ENCODE measurements at regions of chr10 and their contacts with region 1.

Region 1: DNA sequence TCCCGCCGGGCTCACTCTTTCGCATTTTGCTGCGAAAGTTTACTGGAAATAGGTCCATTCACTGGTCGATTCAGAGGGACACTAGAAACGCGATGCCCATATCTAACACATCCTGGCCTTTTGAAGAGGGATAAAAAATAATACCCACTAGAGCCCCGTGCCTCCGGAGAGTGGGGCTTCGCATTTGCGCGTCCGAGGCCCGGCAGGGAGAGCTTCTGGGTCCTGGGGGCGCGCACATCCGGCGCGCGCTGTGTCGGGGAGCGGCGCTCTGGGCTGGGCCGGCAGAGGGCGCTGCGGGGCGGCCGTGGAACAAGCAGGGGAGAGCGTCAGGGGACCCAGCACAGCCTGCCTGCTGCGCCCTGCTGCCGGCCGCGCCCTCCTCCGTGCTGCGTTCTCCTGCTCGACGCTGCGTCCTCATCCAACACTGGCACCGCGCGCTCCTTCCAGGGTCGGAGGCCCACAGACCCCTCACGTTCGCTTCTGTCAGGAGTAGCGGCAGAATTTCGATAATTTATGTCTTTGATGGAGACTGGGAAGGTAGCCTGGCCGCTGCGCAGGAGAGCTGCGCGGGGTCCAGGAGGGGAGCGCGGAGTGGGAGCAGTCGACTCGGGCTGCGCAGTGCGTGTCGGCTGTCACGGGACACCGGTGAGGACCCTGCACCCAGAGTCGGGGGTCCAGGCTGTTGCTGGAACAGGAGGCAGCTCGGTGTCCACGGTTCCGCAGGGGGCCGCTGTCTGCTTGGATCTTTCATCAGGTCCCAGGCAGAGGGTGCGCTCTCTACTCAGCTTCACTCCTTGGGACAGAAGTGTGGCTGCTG is 41.5 kb upstream of the ZNF32 start:
- DNase-seq: peak; percentile 69 to 93 (median 88)
- ATAC-seq: peak; percentile 98
- H3K4me3 ChIP-seq: peak overlapping the region; percentile 90
- H3K4me3 Mint-ChIP-seq: peak overlapping the region; percentile 88 to 93 (median 92)
- H3K27ac ChIP-seq: no peak overlapping the region
- H3K27ac Mint-ChIP-seq: peak overlapping the region in 7 of 9 donors; percentile 28 to 84 (median 43)
- H3K4me1 ChIP-seq: no peaks in the 10 kb centered on the region
- H3K4me1 Mint-ChIP-seq: peaks cover 0 to 10% (median 6%) of the 10 kb centered on the region in 7 donors
- H3K27me3 ChIP-seq: no peaks in the 10 kb centered on the region
- H3K27me3 Mint-ChIP-seq: peaks cover 8 to 27% (median 17%) of the 10 kb centered on the region in 5 donors

Region 2: GRCh38 chr10:43655311-43655710 is 34.9 kb before region 1 on chr10:
- CTCF ChIA-PET with region 1: no interaction called
- POLR2A ChIA-PET with region 1: no interaction called
- intact Hi-C with region 1: no loop called
- DNase-seq: no peak
- ATAC-seq: no peak
- H3K4me3 ChIP-seq: no peak overlapping the region
- H3K4me3 Mint-ChIP-seq: no peak overlapping the region
- H3K27ac ChIP-seq: no peak overlapping the region
- H3K27ac Mint-ChIP-seq: no peak overlapping the region
- H3K4me1 ChIP-seq: no peaks in the 10 kb centered on the region
- H3K4me1 Mint-ChIP-seq: no peaks in the 10 kb centered on the region
- H3K27me3 ChIP-seq: no peaks in the 10 kb centered on the region
- H3K27me3 Mint-ChIP-seq: peaks cover 4 to 16% (median 9%) of the 10 kb centered on the region in 5 donors

Region 3: GRCh38 chr10:43808136-43808535 is 118.0 kb after region 1 on chr10:
- CTCF ChIA-PET with region 1: no interaction called
- POLR2A ChIA-PET with region 1: no interaction called
- intact Hi-C with region 1: loop called in 1 of 2 experiments (anchors 2 kb)
- DNase-seq: peak in 1 of 9 donors; percentile 9
- ATAC-seq: no peak
- H3K4me3 ChIP-seq: no peak overlapping the region
- H3K4me3 Mint-ChIP-seq: peak overlapping the region in 7 of 10 donors; percentile 11 to 69 (median 58)
- H3K27ac ChIP-seq: no peak overlapping the region
- H3K27ac Mint-ChIP-seq: peak overlapping the region in 8 of 9 donors; percentile 2 to 86 (median 55)
- H3K4me1 ChIP-seq: peaks cover 16% of the 10 kb centered on the region in 2 donors
- H3K4me1 Mint-ChIP-seq: peaks cover 20 to 59% (median 52%) of the 10 kb centered on the region in 7 donors
- H3K27me3 ChIP-seq: no peaks in the 10 kb centered on the region
- H3K27me3 Mint-ChIP-seq: peaks cover 0 to 24% (median 0%) of the 10 kb centered on the region in 5 donors

Region 4: GRCh38 chr10:43846187-43846680 is 156.1 kb after region 1 on chr10:
- CTCF ChIA-PET with region 1: no interaction called
- POLR2A ChIA-PET with region 1: interaction called, 3 read pairs
- intact Hi-C with region 1: loop called in 1 of 2 experiments (anchors 1 kb)
- DNase-seq: peak in 5 of 9 donors; percentile 10 to 31 (median 14)
- ATAC-seq: peak; percentile 54
- H3K4me3 ChIP-seq: peak overlapping the region; percentile 54
- H3K4me3 Mint-ChIP-seq: peak overlapping the region; percentile 61 to 88 (median 82)
- H3K27ac ChIP-seq: peak overlapping the region; percentile 36
- H3K27ac Mint-ChIP-seq: peak overlapping the region; percentile 14 to 93 (median 83)
- H3K4me1 ChIP-seq: peaks cover 9 to 12% of the 10 kb centered on the region in 2 donors
- H3K4me1 Mint-ChIP-seq: peaks cover 15 to 44% (median 34%) of the 10 kb centered on the region in 7 donors
- H3K27me3 ChIP-seq: no peaks in the 10 kb centered on the region
- H3K27me3 Mint-ChIP-seq: peaks cover 0 to 4% (median 0%) of the 10 kb centered on the region in 5 donors

Region 5: GRCh38 chr10:43939939-43940820 is 250.0 kb after region 1 on chr10:
- CTCF ChIA-PET with region 1: no interaction called
- POLR2A ChIA-PET with region 1: no interaction called
- intact Hi-C with region 1: no loop called
- DNase-seq: peak in 1 of 9 donors; percentile 8
- ATAC-seq: no peak
- H3K4me3 ChIP-seq: no peak overlapping the region
- H3K4me3 Mint-ChIP-seq: no peak overlapping the region
- H3K27ac ChIP-seq: no peak overlapping the region
- H3K27ac Mint-ChIP-seq: no peak overlapping the region
- H3K4me1 ChIP-seq: peaks cover 0 to 4% of the 10 kb centered on the region in 2 donors
- H3K4me1 Mint-ChIP-seq: peaks cover 0 to 38% (median 22%) of the 10 kb centered on the region in 7 donors
- H3K27me3 ChIP-seq: no peaks in the 10 kb centered on the region
- H3K27me3 Mint-ChIP-seq: peaks cover 4 to 15% (median 13%) of the 10 kb centered on the region in 5 donors

Region 6: GRCh38 chr10:44039599-44039998 is 349.4 kb after region 1 on chr10:
- CTCF ChIA-PET with region 1: no interaction called
- POLR2A ChIA-PET with region 1: no interaction called
- intact Hi-C with region 1: no loop called
- DNase-seq: no peak
- ATAC-seq: no peak
- H3K4me3 ChIP-seq: no peak overlapping the region
- H3K4me3 Mint-ChIP-seq: no peak overlapping the region
- H3K27ac ChIP-seq: no peak overlapping the region
- H3K27ac Mint-ChIP-seq: no peak overlapping the region
- H3K4me1 ChIP-seq: no peaks in the 10 kb centered on the region
- H3K4me1 Mint-ChIP-seq: no peaks in the 10 kb centered on the region
- H3K27me3 ChIP-seq: no peaks in the 10 kb centered on the region
- H3K27me3 Mint-ChIP-seq: peaks cover 0 to 12% (median 10%) of the 10 kb centered on the region in 5 donors

Region 7: DNA sequence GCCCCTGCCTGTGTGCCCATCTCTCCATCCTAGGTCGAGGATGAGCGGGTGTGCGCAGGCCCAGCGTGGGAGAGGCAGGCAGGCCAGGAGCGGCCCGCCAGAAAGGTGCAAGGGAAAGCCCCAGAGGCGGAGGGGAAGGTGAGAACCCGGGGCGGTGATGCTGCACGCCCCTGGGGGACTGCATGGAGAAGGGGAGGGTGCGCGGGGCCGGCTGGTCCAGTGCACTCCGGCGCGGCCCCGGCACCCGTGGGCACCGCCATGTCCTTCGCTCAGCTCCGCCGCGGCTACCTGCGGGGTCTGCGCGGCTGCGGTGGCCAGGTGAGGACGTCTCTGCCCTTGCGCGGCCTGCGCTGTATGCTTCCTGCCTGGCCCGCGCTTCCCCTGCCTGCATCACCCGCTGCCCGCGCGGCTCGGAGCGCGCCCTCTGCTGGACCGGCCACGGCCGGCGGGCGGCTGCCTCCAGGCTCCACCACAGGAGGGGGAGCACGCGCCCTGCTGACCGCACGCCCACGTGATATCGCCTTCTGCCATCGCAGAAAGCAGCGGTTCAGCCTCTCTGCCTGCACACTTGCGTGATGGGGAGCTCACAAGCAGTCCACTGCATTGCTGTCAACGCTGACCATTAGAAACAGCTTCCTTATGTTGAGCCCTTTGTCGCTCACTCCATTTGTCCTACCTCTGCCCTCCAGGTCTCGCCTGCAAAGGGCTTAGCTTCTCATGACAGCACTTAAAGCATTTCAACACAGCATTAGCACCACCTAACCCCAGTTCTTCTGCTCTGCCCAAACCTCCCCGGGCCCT is 620.8 kb after region 1 on chr10:
- CTCF ChIA-PET with region 1: interaction called, 4 read pairs
- POLR2A ChIA-PET with region 1: no interaction called
- intact Hi-C with region 1: loop called (anchors 1 kb)
- DNase-seq: peak in 8 of 9 donors; percentile 6 to 74 (median 46)
- ATAC-seq: peak; percentile 89
- H3K4me3 ChIP-seq: peak overlapping the region; percentile 40
- H3K4me3 Mint-ChIP-seq: peak overlapping the region in 9 of 10 donors; percentile 7 to 65 (median 43)
- H3K27ac ChIP-seq: no peak overlapping the region
- H3K27ac Mint-ChIP-seq: no peak overlapping the region
- H3K4me1 ChIP-seq: peaks cover 0 to 5% of the 10 kb centered on the region in 2 donors
- H3K4me1 Mint-ChIP-seq: peaks cover 0 to 13% (median 7%) of the 10 kb centered on the region in 7 donors
- H3K27me3 ChIP-seq: no peaks in the 10 kb centered on the region
- H3K27me3 Mint-ChIP-seq: peaks cover 11 to 34% (median 19%) of the 10 kb centered on the region in 5 donors

Region 8: DNA sequence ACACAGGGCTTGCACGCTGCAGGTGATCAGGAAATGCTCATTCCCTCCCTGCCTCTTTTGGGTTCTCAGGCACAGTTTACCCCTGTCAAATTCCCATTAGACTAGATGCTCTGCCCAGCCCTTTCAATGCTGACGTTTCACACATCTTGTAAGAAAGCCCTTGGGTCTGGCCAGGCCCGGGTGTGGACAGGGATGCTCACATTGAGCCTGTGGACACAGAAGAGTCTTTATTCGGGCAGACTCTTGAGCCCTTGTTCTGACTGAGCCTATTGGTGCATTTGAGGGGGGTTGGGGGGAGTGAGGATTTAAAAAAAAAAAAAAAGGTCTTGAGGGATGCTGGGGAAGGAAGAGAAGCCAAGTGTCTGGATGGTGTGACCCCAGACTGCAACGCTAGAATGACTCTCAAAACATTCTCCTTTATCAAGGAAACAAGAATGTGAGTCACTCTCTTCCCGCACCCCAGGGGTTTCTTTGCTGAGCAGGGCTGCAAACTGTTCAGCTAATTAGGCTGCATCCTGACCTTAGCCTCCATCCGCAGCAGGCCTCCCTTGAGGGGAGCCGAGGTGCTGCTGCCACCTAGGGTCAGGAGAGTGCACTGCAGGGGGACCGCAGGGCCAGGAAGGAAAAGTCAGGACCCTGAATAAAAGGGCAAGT is 1167.3 kb after region 1 on chr10:
- CTCF ChIA-PET with region 1: interaction called, 4 read pairs
- POLR2A ChIA-PET with region 1: no interaction called
- intact Hi-C with region 1: loop called in 1 of 2 experiments (anchors 1 kb)
- DNase-seq: peak in 6 of 9 donors; percentile 27 to 69 (median 43)
- ATAC-seq: peak; percentile 79
- H3K4me3 ChIP-seq: no peak overlapping the region
- H3K4me3 Mint-ChIP-seq: no peak overlapping the region
- H3K27ac ChIP-seq: no peak overlapping the region
- H3K27ac Mint-ChIP-seq: peak overlapping the region in 1 of 9 donors; percentile 74
- H3K4me1 ChIP-seq: no peaks in the 10 kb centered on the region
- H3K4me1 Mint-ChIP-seq: no peaks in the 10 kb centered on the region
- H3K27me3 ChIP-seq: no peaks in the 10 kb centered on the region
- H3K27me3 Mint-ChIP-seq: peaks cover 3 to 7% (median 4%) of the 10 kb centered on the region in 5 donors

Measured in naive thymus-derived CD4-positive, alpha-beta T cell (primary cell).